ENCODE measurements at regions of chr3 and their contacts with region 1.

Region 1: GRCh38 chr3:13045904-13046568 is 27.2 kb downstream of the IQSEC1 start:
- DNase-seq: peak; percentile 90
- ATAC-seq: peak; percentile 92
- H3K4me3 ChIP-seq: peak overlapping the region in 2 of 5 experiments; percentile 26 to 42
- H3K4me3 Mint-ChIP-seq: peak overlapping the region; percentile 90
- H3K27ac ChIP-seq: peak overlapping the region; percentile 89
- H3K27ac Mint-ChIP-seq: peak overlapping the region; percentile 87
- H3K4me1 ChIP-seq: peaks cover 63 to 71% of the 10 kb centered on the region in 2 donors
- H3K4me1 Mint-ChIP-seq: peaks cover 70% of the 10 kb centered on the region
- H3K27me3 ChIP-seq: no peaks in the 10 kb centered on the region
- H3K27me3 Mint-ChIP-seq: no peaks in the 10 kb centered on the region
- CTCF ChIP-seq: no peak

Region 2: GRCh38 chr3:13002398-13003124 is 43.5 kb before region 1 on chr3:
- CTCF ChIA-PET with region 1: interaction called, 20 read pairs
- POLR2A ChIA-PET with region 1: no interaction called
- intact Hi-C with region 1: loop called (anchors 2 kb)
- DNase-seq: peak; percentile 84
- ATAC-seq: peak; percentile 65
- H3K4me3 ChIP-seq: peak overlapping the region in 2 of 5 experiments; percentile 5 to 35
- H3K4me3 Mint-ChIP-seq: peak overlapping the region; percentile 73
- H3K27ac ChIP-seq: peak overlapping the region; percentile 77 to 97
- H3K27ac Mint-ChIP-seq: peak overlapping the region; percentile 93
- H3K4me1 ChIP-seq: peaks cover 90 to 95% of the 10 kb centered on the region in 2 donors
- H3K4me1 Mint-ChIP-seq: peaks cover 93% of the 10 kb centered on the region
- H3K27me3 ChIP-seq: no peaks in the 10 kb centered on the region
- H3K27me3 Mint-ChIP-seq: no peaks in the 10 kb centered on the region
- CTCF ChIP-seq: no peak

Region 3: DNA sequence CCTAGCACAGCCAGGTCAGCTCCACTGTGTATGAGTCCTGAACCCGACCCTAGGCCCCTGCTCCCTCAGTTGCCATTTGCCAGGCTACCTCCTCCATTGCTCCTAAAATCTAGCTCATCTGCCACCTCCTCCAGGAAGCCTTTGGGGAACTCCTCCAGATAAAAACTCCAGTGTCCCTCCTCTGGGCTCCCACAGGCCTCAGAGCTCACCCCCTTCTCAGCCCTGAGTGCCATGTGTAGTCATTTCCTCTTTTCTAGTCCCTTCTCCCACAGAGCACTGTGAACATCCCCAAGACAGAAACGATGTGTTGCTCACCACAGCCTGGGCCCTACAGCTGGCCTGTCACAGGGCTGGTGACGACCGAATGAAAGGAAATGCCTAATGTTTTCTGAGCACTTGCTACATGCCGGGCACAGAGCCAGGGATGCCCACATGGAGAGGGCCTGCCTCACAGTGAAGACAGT is 33.8 kb before region 1 on chr3:
- CTCF ChIA-PET with region 1: interaction called, 14 read pairs
- POLR2A ChIA-PET with region 1: interaction called, 5 read pairs
- intact Hi-C with region 1: no loop called
- DNase-seq: peak; percentile 88
- ATAC-seq: peak; percentile 31
- H3K4me3 ChIP-seq: peak overlapping the region in 2 of 5 experiments; percentile 3 to 6
- H3K4me3 Mint-ChIP-seq: peak overlapping the region; percentile 86
- H3K27ac ChIP-seq: peak overlapping the region; percentile 96 to 97
- H3K27ac Mint-ChIP-seq: peak overlapping the region; percentile 95
- H3K4me1 ChIP-seq: peaks cover 98 to 100% of the 10 kb centered on the region in 2 donors
- H3K4me1 Mint-ChIP-seq: peaks cover 95% of the 10 kb centered on the region
- H3K27me3 ChIP-seq: no peaks in the 10 kb centered on the region
- H3K27me3 Mint-ChIP-seq: no peaks in the 10 kb centered on the region
- CTCF ChIP-seq: no peak